BJ (cell line): ENCODE measurements at regions of chr11 and their contacts with region 1.

Region 1: GRCh38 chr11:77127232-77127911 is 674 bp upstream of the MYO7A start:
- DNase-seq: no peak
- H3K4me3 ChIP-seq: peak overlapping the region; percentile 37
- H3K27me3 ChIP-seq: no peaks in the 10 kb centered on the region
- CTCF ChIP-seq: peak; percentile 100

Region 2: DNA sequence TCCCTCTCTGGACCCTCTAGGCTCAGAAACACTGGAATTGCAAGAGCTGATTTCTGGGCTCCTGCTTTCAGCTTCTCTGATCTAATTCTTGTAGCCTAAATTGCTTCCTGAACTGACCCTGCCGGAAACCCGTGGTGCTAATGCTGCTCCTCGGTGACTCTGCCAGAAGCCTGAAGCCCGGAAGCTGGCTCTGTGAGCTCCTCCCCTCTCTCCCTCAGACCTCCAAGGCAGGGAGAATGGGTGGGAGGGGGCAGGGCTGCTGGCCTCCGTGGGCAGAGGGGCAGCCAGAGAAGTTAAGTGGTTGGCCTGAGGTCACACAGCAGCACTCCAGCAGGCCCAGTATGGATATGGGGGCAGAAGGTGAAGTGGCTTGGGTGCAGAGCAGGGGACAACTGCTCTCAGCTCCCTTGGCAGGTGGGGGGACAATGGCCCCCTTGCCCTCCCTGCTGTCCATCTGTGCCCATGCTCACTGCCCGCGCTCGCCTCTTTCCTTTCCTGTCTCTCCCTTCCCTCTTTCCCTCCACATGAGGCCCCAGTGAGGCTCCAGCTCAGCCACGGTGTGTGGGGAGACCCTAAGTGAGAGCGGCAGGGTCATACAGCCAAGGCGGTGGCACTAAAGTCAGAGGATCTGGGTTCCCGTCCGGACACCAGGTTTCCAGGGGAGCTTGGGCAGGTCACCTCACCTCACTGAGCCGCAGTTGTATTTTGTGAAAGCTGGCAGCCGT is 44.4 kb before region 1 on chr11:
- CTCF ChIA-PET with region 1: interaction called, 13 read pairs
- POLR2A ChIA-PET with region 1: no interaction called
- DNase-seq: no peak
- H3K4me3 ChIP-seq: no peak overlapping the region
- H3K27me3 ChIP-seq: no peaks in the 10 kb centered on the region
- CTCF ChIP-seq: no peak

Region 3: DNA sequence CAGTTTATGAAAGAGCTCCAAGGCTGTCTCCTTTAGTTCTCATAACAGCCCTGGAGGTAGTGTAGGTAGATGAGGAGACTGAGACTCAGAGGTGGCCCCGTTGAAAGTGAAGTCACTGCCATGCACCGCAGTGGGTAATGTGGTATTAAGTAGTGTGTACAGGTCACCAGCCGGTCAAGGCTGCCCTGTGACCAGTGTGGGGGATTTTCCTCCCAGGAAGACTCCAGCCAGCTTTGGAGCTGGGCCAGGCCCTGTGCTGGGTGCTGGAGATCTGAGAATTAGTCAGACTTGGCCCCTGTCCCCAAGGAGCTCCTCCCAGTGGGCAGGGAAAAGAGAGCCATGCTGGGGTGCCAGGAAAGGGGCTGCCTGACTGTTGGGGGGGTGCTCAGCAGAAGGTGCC is 19.4 kb before region 1 on chr11:
- CTCF ChIA-PET with region 1: interaction called, 71 read pairs
- POLR2A ChIA-PET with region 1: no interaction called
- DNase-seq: peak; percentile 41
- H3K4me3 ChIP-seq: no peak overlapping the region
- H3K27me3 ChIP-seq: no peaks in the 10 kb centered on the region
- CTCF ChIP-seq: no peak

Region 4: DNA sequence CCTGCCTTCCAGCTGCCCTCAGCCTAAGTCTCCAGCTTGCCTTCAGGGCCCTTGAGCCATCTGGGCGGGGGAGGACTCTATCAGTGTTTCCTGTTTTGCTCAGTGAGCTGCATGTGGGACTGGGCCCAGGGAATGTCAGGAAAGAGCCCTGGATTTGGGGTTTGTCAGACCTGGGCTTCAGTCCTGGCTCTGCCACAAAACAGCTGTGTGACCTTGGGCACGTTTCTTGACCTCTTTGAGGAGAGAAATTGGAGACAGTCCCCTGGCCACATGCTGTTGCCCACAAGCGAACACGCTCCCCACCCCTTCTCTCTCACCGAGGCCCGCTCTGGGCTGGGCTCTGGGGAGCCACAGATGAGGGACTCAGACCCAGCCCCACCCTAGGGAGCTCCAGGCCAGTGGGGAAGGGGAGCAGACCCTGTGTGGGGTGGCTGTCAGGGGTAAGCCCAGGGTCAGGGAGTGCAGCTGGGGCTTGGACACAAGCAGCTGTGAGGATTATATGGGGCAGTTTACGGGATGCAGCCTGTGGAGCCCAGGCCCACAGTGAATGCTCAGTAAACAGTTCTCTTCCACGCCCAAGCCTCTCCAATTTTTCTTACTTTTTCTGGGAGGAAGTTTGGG is 13.0 kb after region 1 on chr11:
- CTCF ChIA-PET with region 1: interaction called, 30 read pairs
- POLR2A ChIA-PET with region 1: no interaction called
- DNase-seq: no peak
- H3K4me3 ChIP-seq: no peak overlapping the region
- H3K27me3 ChIP-seq: peaks cover 5% of the 10 kb centered on the region
- CTCF ChIP-seq: no peak

Region 5: DNA sequence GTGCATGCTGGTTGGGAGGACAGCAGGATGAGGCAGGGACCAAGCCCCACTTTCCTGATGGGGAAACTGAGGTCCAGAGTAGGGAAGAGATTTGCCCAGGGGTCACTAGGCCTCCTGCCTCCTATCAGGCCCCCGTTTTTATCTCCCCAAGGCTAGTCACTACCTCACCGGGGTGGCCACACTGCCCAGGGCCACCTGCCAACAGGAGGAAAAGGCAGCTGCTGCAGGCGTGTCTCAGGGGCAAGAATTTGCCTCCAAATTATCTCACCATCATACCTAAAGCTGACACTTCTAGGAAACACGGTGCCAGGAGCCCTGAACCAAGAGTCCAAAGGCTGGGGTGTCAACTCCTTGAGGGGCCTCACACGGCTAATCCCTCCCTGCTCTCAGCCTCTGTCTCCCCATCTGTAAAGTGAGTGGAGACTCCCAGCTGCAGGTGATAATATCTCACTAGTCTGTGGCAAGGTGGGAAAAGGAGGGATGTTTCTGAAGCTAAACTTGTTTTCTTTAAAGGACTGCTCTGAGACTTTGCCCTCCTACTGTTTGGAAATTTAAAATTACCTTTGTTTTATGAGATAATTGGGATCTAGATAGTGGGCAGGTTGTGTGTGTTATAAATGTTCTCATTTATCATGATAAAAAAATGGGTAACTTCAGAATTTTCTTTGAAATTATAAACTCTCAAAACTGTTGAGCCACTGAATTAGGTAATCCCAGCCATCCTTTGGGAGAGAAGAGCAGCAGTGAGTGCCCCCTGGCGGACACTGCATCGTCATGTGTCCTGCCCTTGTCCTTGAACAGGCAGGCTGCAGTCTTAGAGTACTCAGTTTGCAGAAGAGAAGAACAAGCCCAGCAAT is 60.6 kb after region 1 on chr11:
- CTCF ChIA-PET with region 1: interaction called, 167 read pairs
- POLR2A ChIA-PET with region 1: no interaction called
- DNase-seq: no peak
- H3K4me3 ChIP-seq: no peak overlapping the region
- H3K27me3 ChIP-seq: peaks cover 6% of the 10 kb centered on the region
- CTCF ChIP-seq: peak; percentile 92

Region 6: GRCh38 chr11:77547863-77548551 is 420.6 kb after region 1 on chr11:
- CTCF ChIA-PET with region 1: interaction called, 49 read pairs
- POLR2A ChIA-PET with region 1: no interaction called
- DNase-seq: no peak
- H3K4me3 ChIP-seq: no peak overlapping the region
- H3K27me3 ChIP-seq: no peaks in the 10 kb centered on the region
- CTCF ChIP-seq: peak; percentile 66

Region 7: GRCh38 chr11:77611921-77612320 is 484.5 kb after region 1 on chr11:
- CTCF ChIA-PET with region 1: interaction called, 11 read pairs
- POLR2A ChIA-PET with region 1: no interaction called
- DNase-seq: no peak
- H3K4me3 ChIP-seq: no peak overlapping the region
- H3K27me3 ChIP-seq: no peaks in the 10 kb centered on the region
- CTCF ChIP-seq: no peak